Mammary epithelial cell (primary cell): ENCODE measurements at regions of chrX and their contacts with region 1.

Region 1: GRCh38 chrX:18390941-18391538 is 34.4 kb upstream of the CDKL5 start:
- DNase-seq: peak; percentile 10
- H3K4me3 ChIP-seq: no peak overlapping the region
- H3K27ac ChIP-seq: no peak overlapping the region
- H3K4me1 ChIP-seq: peaks cover 2% of the 10 kb centered on the region
- H3K27me3 ChIP-seq: no peaks in the 10 kb centered on the region
- CTCF ChIP-seq: peak; percentile 58 to 62

Region 2: DNA sequence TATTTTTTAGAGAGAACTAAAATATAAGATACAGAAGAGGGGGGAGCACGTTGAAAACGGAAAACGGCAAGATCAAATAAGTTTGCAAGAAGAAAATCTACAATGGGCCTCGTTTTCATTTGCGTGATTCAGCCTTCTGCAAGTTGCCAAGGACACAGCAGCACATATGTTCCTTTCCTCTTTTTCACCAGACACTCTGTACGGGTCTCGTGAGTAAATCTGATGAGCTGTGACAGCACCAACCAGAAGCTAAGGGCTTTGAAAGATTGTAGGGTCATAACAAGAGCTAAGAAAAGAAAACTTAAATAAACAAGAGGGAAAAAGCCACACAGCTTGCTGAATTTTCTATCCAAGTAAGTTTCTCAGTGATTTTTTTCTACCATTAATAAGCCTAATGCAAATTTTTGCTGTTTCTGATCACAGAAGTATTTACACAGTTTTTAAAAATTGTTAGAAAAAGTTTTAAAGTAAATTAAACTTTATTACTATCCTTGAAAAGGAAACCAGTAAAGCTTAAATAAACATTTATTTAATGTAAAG is 100.0 kb before region 1 on chrX:
- CTCF ChIA-PET with region 1: no interaction called
- dilution Hi-C with region 1: no loop called
- in situ Hi-C with region 1: no loop called
- intact Hi-C with region 1: no loop called
- DNase-seq: no peak
- H3K4me3 ChIP-seq: no peak overlapping the region
- H3K27ac ChIP-seq: no peak overlapping the region
- H3K4me1 ChIP-seq: no peaks in the 10 kb centered on the region
- H3K27me3 ChIP-seq: no peaks in the 10 kb centered on the region
- CTCF ChIP-seq: no peak

Region 3: GRCh38 chrX:18899796-18900447 is 508.9 kb after region 1 on chrX:
- CTCF ChIA-PET with region 1: no interaction called
- dilution Hi-C with region 1: no loop called
- in situ Hi-C with region 1: loop called in 1 of 2 experiments (anchors 10 kb)
- intact Hi-C with region 1: loop called (anchors 1 kb)
- DNase-seq: no peak
- H3K4me3 ChIP-seq: no peak overlapping the region
- H3K27ac ChIP-seq: no peak overlapping the region
- H3K4me1 ChIP-seq: peaks cover 13% of the 10 kb centered on the region
- H3K27me3 ChIP-seq: no peaks in the 10 kb centered on the region
- CTCF ChIP-seq: peak in 1 of 2 donors; percentile 30

Region 4: GRCh38 chrX:19005910-19006309 is 614.9 kb after region 1 on chrX:
- CTCF ChIA-PET with region 1: no interaction called
- dilution Hi-C with region 1: no loop called
- in situ Hi-C with region 1: no loop called
- intact Hi-C with region 1: loop called (anchors 10 kb)
- DNase-seq: no peak
- H3K4me3 ChIP-seq: no peak overlapping the region
- H3K27ac ChIP-seq: no peak overlapping the region
- H3K4me1 ChIP-seq: no peaks in the 10 kb centered on the region
- H3K27me3 ChIP-seq: no peaks in the 10 kb centered on the region
- CTCF ChIP-seq: peak in 1 of 2 donors; percentile 45

Region 5: GRCh38 chrX:19334945-19335626 is 944.0 kb after region 1 on chrX:
- CTCF ChIA-PET with region 1: no interaction called
- dilution Hi-C with region 1: loop called (anchors 25 kb)
- in situ Hi-C with region 1: loop called (anchors 5 to 10 kb)
- intact Hi-C with region 1: loop called (anchors 1 kb)
- DNase-seq: peak; percentile 5
- H3K4me3 ChIP-seq: no peak overlapping the region
- H3K27ac ChIP-seq: no peak overlapping the region
- H3K4me1 ChIP-seq: no peaks in the 10 kb centered on the region
- H3K27me3 ChIP-seq: no peaks in the 10 kb centered on the region
- CTCF ChIP-seq: peak; percentile 23 to 41

Region 6: DNA sequence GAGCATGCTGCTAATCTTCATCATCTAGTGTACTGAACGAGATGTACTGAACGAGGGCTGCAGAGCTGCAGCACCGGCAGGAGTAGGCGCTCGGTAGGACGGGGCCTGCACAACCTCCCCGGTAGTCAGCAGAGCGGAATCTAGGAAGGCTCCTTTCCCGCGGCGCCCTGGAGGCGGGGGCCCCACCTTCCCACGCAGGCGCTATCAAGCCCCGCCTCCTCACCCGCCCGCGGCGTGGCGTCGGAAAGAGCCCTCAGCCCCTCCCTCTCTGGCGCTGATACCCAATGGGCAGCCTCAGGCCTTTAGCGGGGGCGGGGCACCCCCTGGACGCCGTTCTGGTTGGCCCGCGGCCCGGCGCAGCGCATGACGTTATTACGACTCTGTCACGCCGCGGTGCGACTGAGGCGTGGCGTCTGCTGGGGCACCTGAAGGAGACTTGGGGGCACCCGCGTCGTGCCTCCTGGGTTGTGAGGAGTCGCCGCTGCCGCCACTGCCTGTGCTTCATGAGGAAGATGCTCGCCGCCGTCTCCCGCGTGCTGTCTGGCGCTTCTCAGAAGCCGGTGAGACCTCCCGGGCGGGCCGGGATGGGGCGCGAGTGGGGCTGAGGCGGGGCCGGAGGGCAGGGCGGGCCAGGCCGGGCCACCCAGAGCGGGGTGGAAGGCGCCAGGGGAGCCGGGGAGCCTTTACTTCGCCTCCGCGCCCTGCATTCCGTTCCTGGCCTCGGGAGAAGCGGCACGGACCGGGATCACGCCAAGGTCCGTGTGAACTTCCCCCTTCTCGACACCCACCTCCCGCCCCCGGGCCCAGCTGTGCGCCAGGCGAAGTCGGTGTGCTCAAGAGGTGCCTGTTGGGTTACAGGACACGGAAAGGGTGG is 952.7 kb after region 1 on chrX and contains the start of gene PDHA1:
- CTCF ChIA-PET with region 1: interaction called, 4 read pairs
- dilution Hi-C with region 1: loop called (anchors 25 kb)
- in situ Hi-C with region 1: loop called (anchors 5 to 10 kb)
- intact Hi-C with region 1: no loop called
- DNase-seq: peak; percentile 90
- H3K4me3 ChIP-seq: peak within 1 kb of the TSS; percentile 69 to 79 (median 76)
- H3K27ac ChIP-seq: peak within 1 kb of the TSS; percentile 61
- H3K4me1 ChIP-seq: peaks cover 5% of the 10 kb centered on the region
- H3K27me3 ChIP-seq: no peaks in the 10 kb centered on the region
- CTCF ChIP-seq: no peak
- total RNA-seq, gene PDHA1: 48.8 to 176 TPM